ENCODE measurements at regions of chr19 and their contacts with region 1.

Region 1: DNA sequence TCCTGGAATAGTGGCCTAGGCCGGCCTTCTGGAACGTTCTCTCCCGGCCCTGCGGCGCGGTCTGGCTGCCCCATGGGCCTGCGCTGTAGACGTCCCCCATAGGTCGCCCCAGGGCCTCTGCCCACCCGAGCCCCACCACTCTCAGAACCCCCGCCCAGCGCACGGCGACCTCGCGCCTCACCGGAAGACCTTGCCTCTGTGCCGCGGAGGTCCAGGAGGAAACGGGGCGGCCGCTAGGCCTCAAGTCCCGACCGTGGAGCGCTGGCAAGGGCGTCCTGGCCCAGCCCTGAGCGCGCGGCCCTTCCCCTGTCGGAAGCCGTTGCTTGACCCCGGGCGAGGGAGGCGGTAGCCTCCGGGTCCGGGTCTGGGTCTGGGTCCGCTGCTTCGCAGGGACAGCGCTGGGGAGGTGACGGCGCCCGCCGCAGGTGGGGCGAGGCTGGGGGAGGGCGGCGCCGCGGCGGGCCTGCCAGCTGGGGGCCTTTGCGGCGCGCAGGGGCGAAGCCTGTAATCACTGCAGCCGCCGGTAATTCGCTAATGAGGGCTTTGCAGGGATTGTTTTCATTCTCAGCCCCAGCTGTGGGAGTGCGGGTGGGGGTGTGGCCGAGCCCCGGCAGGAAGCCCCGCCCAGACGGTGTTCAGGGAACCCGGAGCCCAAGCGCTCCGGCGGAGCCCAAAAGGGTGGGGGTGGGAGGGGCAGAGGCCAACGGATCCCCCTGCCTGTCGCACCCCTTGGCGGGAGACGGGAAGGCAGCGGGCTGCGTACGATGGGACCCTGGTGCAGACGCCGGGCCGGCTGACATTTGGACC is 8.6 kb downstream of the C19orf25 start:
- DNase-seq: peak; percentile 48 to 86 (median 74)
- ATAC-seq: peak; percentile 82
- H3K4me3 ChIP-seq: peak overlapping the region; percentile 62
- H3K4me3 Mint-ChIP-seq: peak overlapping the region; percentile 68
- H3K27ac ChIP-seq: no peak overlapping the region
- H3K27ac Mint-ChIP-seq: no peak overlapping the region
- H3K4me1 ChIP-seq: peaks cover 65% of the 10 kb centered on the region
- H3K4me1 Mint-ChIP-seq: peaks cover 11% of the 10 kb centered on the region
- H3K27me3 ChIP-seq: peaks cover 18 to 29% of the 10 kb centered on the region in 2 experiments
- H3K27me3 Mint-ChIP-seq: no peaks in the 10 kb centered on the region
- CTCF ChIP-seq: no peak

Region 2: GRCh38 chr19:1445185-1445931 is 25.0 kb before region 1 on chr19:
- CTCF ChIA-PET with region 1: interaction called, 16 read pairs
- POLR2A ChIA-PET with region 1: interaction called, 8 read pairs
- intact Hi-C with region 1: loop called in 1 of 2 experiments (anchors 2 kb)
- DNase-seq: peak; percentile 55 to 88 (median 72)
- ATAC-seq: peak; percentile 86
- H3K4me3 ChIP-seq: peak overlapping the region; percentile 52
- H3K4me3 Mint-ChIP-seq: peak overlapping the region; percentile 69
- H3K27ac ChIP-seq: no peak overlapping the region
- H3K27ac Mint-ChIP-seq: no peak overlapping the region
- H3K4me1 ChIP-seq: peaks cover 50% of the 10 kb centered on the region
- H3K4me1 Mint-ChIP-seq: peaks cover 22% of the 10 kb centered on the region
- H3K27me3 ChIP-seq: peaks cover 33 to 44% of the 10 kb centered on the region in 2 experiments
- H3K27me3 Mint-ChIP-seq: peaks cover 27% of the 10 kb centered on the region
- CTCF ChIP-seq: peak; percentile 87

Region 3: GRCh38 chr19:1455336-1456120 is 14.9 kb before region 1 on chr19:
- CTCF ChIA-PET with region 1: interaction called, 4 read pairs
- POLR2A ChIA-PET with region 1: interaction called, 12 read pairs
- intact Hi-C with region 1: no loop called
- DNase-seq: peak in 11 of 14 experiments; percentile 24 to 82 (median 45)
- ATAC-seq: peak; percentile 79
- H3K4me3 ChIP-seq: no peak overlapping the region
- H3K4me3 Mint-ChIP-seq: no peak overlapping the region
- H3K27ac ChIP-seq: no peak overlapping the region
- H3K27ac Mint-ChIP-seq: no peak overlapping the region
- H3K4me1 ChIP-seq: peaks cover 28% of the 10 kb centered on the region
- H3K4me1 Mint-ChIP-seq: peaks cover 27% of the 10 kb centered on the region
- H3K27me3 ChIP-seq: peaks cover 55 to 70% of the 10 kb centered on the region in 2 experiments
- H3K27me3 Mint-ChIP-seq: peaks cover 64% of the 10 kb centered on the region
- CTCF ChIP-seq: no peak

Region 4: GRCh38 chr19:1490311-1491113 is 20.1 kb after region 1 on chr19 and contains the start of gene PCSK4:
- CTCF ChIA-PET with region 1: interaction called, 9 read pairs
- POLR2A ChIA-PET with region 1: interaction called, 8 read pairs
- intact Hi-C with region 1: loop called in 1 of 2 experiments (anchors 1 kb)
- DNase-seq: peak; percentile 96 to 99 (median 98)
- ATAC-seq: peak; percentile 86
- H3K4me3 ChIP-seq: peak within 1 kb of the TSS; percentile 61
- H3K4me3 Mint-ChIP-seq: peak within 1 kb of the TSS; percentile 84
- H3K27ac ChIP-seq: peak within 1 kb of the TSS; percentile 29 to 34
- H3K27ac Mint-ChIP-seq: peak within 1 kb of the TSS; percentile 60
- H3K4me1 ChIP-seq: peaks cover 23% of the 10 kb centered on the region
- H3K4me1 Mint-ChIP-seq: peaks cover 12% of the 10 kb centered on the region
- H3K27me3 ChIP-seq: no peaks in the 10 kb centered on the region
- H3K27me3 Mint-ChIP-seq: no peaks in the 10 kb centered on the region
- CTCF ChIP-seq: no peak
- total RNA-seq, gene PCSK4: 4.2 to 5.2 TPM

Region 5: DNA sequence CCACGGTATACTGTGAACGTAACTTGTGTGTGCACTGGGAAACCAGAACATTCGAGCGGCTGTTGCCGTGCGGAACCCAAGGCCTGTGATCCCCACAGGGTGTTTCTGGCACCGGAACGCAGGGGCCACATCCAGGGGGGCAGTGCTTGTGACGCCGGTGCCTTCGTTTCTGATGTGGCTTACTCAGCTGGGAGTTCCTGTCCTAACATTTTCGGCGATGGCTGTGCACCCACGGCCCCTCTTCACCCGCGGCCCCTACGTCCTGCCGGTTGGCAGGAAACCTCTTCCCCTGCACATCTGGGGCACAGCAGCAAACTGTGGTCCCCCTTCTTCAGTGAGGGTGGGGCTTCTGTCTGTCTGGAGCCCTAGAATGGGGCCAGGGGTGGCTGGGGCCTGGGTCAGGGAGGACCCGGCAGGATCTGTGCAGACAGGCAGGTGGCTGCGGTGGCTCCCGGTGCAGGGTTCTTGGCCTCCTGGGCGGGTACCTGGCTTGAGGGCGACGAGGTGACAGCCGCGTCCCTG is 496.7 kb after region 1 on chr19:
- CTCF ChIA-PET with region 1: no interaction called
- POLR2A ChIA-PET with region 1: no interaction called
- intact Hi-C with region 1: no loop called
- DNase-seq: peak in 9 of 14 experiments; percentile 6 to 63 (median 35)
- ATAC-seq: peak; percentile 59
- H3K4me3 ChIP-seq: peak overlapping the region; percentile 14
- H3K4me3 Mint-ChIP-seq: peak overlapping the region; percentile 65
- H3K27ac ChIP-seq: peak overlapping the region in 1 of 2 donors; percentile 23
- H3K27ac Mint-ChIP-seq: peak overlapping the region; percentile 79
- H3K4me1 ChIP-seq: peaks cover 31% of the 10 kb centered on the region
- H3K4me1 Mint-ChIP-seq: peaks cover 17% of the 10 kb centered on the region
- H3K27me3 ChIP-seq: no peaks in the 10 kb centered on the region
- H3K27me3 Mint-ChIP-seq: no peaks in the 10 kb centered on the region
- CTCF ChIP-seq: no peak

Measured in CD4-positive, alpha-beta T cell (primary cell).